ENCODE measurements at regions of chr16 and their contacts with region 1.

Region 1: DNA sequence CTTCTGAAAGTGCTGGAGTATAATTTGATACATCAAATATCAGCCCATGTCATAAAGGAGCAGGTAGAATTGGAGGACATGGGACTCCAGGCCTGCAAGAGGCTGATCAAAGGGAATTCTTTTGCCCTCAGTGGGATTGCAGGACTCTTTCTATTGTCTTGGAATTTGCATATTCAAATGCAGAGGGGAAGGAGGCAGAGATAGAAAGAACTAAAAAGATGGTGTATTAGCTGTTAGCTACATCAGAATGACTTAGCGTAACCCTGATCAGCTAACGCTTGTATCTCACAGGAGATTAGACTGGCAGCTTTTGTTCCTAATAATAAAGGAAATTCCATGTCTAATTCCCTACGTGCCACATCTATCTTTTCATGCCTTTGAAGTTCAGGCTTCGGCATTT is 1014.7 kb upstream of the RBFOX1 start:
- DNase-seq: no peak
- ATAC-seq: no peak
- H3K4me3 ChIP-seq: no peak overlapping the region
- H3K27ac ChIP-seq: no peak overlapping the region
- H3K4me1 ChIP-seq: no peaks in the 10 kb centered on the region
- H3K27me3 ChIP-seq: no peaks in the 10 kb centered on the region

Region 2: DNA sequence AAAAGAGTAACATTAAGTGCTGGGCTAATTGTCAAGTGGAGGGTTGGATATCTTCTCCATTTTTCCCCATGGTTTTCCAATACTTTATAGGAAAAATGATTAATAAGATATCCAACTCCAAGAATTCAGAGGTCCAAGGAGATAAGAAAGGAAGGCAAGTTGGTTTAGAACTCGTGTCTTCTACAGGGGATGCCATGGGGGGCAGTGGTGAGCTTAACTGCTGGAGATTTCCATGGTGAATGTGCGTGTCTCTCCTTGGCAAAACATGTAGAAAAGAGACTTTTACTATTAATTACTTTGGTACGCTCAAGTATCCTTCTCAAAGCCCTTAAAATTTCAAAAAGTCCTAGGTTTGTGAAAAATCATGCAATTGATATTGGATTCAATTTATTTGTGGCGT is 31.8 kb after region 1 on chr16:
- intact Hi-C with region 1: loop called in 1 of 4 experiments (anchors 5 kb)
- DNase-seq: no peak
- ATAC-seq: no peak
- H3K4me3 ChIP-seq: no peak overlapping the region
- H3K27ac ChIP-seq: no peak overlapping the region
- H3K4me1 ChIP-seq: no peaks in the 10 kb centered on the region
- H3K27me3 ChIP-seq: no peaks in the 10 kb centered on the region

Region 3: DNA sequence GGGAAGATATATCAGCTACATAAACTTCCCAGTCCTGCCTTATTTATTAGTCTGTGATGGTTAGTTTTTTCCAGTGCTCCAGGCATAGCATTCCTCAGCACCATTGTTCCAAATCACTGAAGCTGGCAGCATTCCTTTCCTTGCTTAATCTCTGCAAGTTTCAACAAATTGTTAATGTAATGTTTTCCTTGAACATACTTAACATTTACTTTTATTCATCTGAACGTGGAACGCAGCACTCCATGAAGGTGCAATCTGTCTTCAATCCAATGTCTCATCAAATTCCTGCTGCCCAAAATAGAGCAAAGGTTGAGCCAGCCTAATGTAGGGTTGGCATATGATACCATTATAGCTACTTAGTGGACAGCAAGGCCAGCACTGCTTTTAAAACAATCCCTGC is 573.6 kb after region 1 on chr16:
- intact Hi-C with region 1: no loop called
- DNase-seq: no peak
- ATAC-seq: no peak
- H3K4me3 ChIP-seq: no peak overlapping the region
- H3K27ac ChIP-seq: no peak overlapping the region
- H3K4me1 ChIP-seq: no peaks in the 10 kb centered on the region
- H3K27me3 ChIP-seq: no peaks in the 10 kb centered on the region

Measured in right cardiac atrium (tissue), 5 donors.